Activated CD4-positive, alpha-beta memory T cell treated with anti-CD3 and anti-CD28 coated beads, Interleukin-2, amount 10 ng/mL, durations not matched to agents 7 days and 5 days (primary cell): ENCODE measurements at regions of chr6 and their contacts with region 1.

Region 1: DNA sequence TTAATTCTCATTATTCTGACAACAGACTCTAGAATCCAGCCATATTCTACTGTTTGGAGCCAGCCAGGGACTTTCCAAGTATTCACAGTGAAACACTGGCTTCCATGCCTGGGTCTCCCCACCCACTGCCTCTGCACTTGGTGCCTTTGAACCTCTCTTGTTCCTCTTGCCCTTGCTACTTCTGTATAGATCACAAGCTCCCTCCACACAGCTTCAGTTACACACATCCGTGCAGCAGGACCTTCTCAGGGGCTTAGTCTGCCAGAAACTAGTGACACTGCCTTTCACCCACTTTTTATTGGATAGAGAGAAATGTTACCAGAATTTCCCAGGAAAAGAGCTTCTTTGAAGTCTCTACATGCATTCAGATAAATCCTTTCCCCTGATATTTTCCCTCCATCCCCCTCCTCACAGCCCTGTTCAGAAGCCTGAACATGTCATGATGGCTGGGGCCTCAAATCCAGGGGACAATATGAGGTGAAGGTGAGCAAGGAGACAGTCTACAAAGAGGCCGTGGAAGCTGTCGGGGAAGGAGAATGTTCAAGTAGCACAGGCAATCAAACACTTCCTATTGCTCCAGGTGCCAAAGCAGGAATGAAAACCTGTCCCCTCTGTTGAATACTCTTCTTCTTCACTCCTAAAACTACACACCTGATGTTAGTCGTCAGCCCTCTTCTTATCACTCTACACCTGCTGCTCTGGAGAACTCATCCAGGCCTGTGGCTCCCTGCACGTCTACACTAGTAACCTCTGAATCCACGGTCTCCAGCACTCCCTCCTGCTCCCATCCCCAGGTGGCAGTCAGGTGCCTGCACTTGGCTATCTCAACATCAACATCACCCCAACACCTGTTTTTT is 20.2 kb upstream of the HLA-DOA start:
- DNase-seq: peak; percentile 34
- H3K4me3 Mint-ChIP-seq: no peak overlapping the region
- H3K27ac Mint-ChIP-seq: peak overlapping the region; percentile 75
- H3K4me1 Mint-ChIP-seq: peaks cover 33% of the 10 kb centered on the region
- H3K27me3 Mint-ChIP-seq: peaks cover 21% of the 10 kb centered on the region

Region 2: DNA sequence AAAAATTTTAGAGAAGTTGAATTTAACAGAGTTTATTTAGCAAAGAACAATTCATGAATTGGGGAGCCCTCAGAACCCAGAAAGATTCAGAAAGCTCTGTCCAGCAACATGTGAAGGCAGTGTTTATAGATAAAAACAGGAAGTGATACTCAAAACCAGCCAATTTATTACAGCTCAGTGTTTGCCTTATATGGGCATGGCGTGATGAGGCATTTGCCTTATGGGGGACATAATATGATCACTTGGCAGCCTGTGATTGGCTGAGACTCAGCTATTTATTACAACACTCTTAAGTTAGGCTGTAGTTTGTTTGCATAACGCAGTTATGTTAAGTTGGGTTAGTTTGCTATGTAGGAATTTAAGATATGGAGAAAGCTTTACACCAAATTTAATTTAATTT is 32.4 kb after region 1 on chr6:
- CTCF ChIA-PET with region 1: no interaction called
- POLR2A ChIA-PET with region 1: no interaction called
- DNase-seq: no peak
- H3K4me3 Mint-ChIP-seq: no peak overlapping the region
- H3K27ac Mint-ChIP-seq: no peak overlapping the region
- H3K4me1 Mint-ChIP-seq: no peaks in the 10 kb centered on the region
- H3K27me3 Mint-ChIP-seq: peaks cover 17% of the 10 kb centered on the region

Region 3: DNA sequence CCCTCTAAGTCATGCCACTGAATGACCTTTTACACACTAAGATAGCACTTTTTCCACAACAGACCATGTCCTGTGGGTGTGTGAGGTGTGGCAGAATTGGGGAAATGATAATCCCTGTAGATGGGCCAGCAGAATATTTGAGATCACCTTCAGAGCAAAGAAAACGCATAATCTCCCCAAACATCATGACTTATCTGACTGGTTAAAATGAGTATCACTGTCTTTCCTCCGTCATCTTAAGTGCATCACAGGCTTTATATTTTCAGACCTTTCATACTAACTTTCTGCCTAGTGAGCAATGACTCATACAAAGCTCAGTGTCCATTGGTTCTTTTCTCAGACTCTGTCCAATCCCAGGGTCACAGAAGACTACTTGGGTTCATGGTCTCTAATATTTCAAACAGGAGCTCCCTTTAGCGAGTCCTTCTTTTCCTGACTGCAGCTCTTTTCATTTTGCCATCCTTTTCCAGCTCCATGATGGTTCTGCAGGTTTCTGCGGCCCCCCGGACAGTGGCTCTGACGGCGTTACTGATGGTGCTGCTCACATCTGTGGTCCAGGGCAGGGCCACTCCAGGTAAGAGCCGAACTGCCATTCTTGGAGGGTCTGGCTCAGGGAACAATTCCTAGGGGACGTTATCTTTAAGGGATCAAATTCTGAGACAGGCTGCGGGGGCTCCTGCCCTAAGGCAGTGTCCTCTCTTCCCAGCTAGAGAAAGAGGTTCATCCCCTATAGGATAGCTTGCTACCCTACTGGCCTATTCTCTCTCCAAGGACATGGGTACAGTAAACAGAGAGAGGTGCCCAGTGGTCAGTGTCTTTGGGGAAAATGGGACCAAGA is 46.2 kb after region 1 on chr6 and contains the start of gene HLA-DPB1:
- CTCF ChIA-PET with region 1: no interaction called
- POLR2A ChIA-PET with region 1: interaction called, 22 read pairs
- DNase-seq: peak; percentile 34
- H3K4me3 Mint-ChIP-seq: peak within 1 kb of the TSS; percentile 79
- H3K27ac Mint-ChIP-seq: peak within 1 kb of the TSS; percentile 78
- H3K4me1 Mint-ChIP-seq: peaks cover 69% of the 10 kb centered on the region
- H3K27me3 Mint-ChIP-seq: no peaks in the 10 kb centered on the region
- total RNA-seq, gene HLA-DPB1: 89.8 to 95.6 TPM

Region 4: DNA sequence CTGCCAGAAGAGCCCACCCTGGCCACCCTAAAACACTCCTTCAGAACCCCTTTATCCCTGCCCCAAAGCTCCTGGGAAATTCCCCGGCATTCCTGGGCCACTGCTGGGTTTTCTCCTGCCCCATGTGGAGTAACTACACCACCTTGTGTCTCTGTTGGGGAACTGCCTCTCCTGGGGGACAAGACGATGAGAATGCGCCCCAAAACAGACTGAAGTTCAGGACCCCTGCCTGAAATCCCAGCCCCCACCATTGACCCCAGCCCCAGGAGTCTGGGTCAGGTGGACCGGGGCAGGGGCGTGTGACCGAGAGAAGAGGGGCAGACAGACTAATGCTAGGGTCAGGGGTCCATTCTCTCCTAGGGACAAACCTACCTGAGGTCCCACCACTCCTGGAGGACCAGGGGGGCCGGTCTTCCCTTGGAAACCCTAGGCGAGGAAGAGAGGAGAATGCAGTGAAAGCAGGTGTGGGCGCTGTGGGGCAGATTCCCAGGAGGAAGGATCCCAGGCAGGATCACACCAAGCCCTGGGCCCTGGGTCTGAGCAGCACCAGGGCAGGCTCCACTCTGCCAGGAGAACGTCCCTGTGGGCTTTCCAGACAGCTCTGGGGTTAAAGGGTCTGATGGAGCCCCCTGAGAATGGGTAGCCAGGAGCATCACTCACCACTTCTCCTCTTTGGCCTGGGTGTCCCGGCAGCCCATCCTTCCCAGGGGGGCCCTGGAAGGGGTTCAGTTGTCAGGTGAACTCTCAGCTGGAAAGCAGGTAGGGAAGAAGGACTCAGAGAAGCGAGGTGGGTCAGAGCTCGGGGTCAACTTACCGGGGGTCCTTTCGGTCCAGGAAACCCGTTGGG is 143.4 kb after region 1 on chr6:
- CTCF ChIA-PET with region 1: no interaction called
- POLR2A ChIA-PET with region 1: no interaction called
- DNase-seq: no peak
- H3K4me3 Mint-ChIP-seq: no peak overlapping the region
- H3K27ac Mint-ChIP-seq: no peak overlapping the region
- H3K4me1 Mint-ChIP-seq: no peaks in the 10 kb centered on the region
- H3K27me3 Mint-ChIP-seq: peaks cover 2% of the 10 kb centered on the region